Gastrocnemius medialis (tissue), 4 donors: ENCODE measurements at regions of chr2 and their contacts with region 1.

Region 1: DNA sequence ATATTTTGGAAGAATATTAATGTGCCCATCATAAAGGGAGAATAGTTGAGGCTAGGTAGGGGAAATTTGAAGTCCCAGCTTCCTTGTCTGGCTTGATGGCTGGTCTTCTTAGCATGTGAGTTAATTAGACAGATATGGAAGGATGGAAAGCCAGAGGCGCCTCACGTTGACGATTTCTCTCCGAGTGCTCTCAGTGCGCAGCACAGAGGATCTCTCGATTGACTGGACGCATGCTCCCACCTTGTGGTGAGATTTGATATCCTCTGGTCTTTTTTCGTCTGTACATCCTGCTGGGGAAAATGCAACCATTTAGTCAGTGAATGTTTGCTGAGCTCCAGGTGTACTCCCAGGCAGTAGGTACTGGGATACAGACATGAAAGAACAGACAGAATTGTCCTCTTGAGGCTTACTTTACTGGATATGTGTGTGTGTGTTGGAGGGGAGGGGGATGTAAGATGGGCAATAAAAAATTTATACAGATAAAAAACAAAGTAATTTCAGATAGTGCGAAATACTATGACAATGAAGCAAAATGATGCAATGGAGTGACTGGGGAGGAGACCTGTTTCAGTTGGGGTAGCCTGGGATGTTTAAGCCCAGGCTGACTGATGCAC is 66.9 kb upstream of the ZNG1B start:
- DNase-seq: peak; percentile 39 to 64
- ATAC-seq: peak; percentile 90 to 93
- H3K4me3 ChIP-seq: no peak overlapping the region
- H3K27ac ChIP-seq: no peak overlapping the region
- H3K4me1 ChIP-seq: peaks cover 0 to 2% of the 10 kb centered on the region in 2 donors
- H3K27me3 ChIP-seq: no peaks in the 10 kb centered on the region
- CTCF ChIP-seq: peak; percentile 48 to 74 (median 70)
- POLR2A ChIP-seq: no peak

Region 2: GRCh38 chr2:113203901-113204519 is 166.6 kb before region 1 on chr2:
- in situ Hi-C with region 1: no loop called
- intact Hi-C with region 1: loop called (anchors 2 kb)
- DNase-seq: peak; percentile 43 to 62
- ATAC-seq: peak; percentile 82 to 85
- H3K4me3 ChIP-seq: no peak overlapping the region
- H3K27ac ChIP-seq: no peak overlapping the region
- H3K4me1 ChIP-seq: peaks cover 0 to 3% of the 10 kb centered on the region in 2 donors
- H3K27me3 ChIP-seq: no peaks in the 10 kb centered on the region
- CTCF ChIP-seq: peak; percentile 65 to 82 (median 72)
- POLR2A ChIP-seq: no peak

Region 3: DNA sequence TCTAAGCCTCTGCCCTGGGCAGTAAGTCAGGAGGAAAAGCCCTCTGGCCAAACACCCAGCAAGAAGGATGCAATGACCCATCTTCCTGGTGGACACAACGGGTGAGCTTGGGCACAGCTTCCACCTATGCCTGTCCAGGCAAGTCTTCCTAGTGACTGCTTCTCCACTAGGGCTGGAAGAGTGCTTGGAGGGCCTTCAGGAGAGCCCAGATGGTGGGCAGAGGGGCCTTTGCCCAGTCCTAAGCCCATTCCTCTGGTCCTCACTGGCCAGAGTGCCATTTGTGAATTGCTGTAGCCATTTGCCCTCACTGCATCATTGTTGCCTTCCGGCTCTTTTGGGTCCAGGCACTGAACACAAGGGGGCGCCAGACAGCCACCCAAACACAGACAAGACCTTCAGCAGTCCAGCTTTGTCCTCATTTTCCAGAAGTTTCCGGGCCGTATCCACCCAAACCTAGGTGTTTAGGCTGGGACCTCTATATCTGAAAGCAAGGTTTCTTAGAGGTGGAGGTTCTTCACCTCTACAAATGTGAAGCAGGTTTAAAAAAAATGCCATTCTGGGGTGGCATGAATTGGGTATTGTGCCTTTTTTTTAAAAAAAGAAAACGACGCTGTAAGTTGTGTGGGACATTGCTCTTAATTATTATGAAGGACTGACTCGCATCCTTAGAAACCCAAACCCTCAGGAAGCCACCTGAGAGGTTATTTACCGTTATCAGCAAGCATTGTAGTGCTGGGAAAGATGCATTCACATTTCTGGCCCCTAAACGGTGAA is 121.4 kb before region 1 on chr2:
- in situ Hi-C with region 1: loop called (anchors 5 to 25 kb)
- intact Hi-C with region 1: loop called (anchors 1 kb)
- DNase-seq: peak; percentile 44 to 74
- ATAC-seq: peak; percentile 66 to 71
- H3K4me3 ChIP-seq: no peak overlapping the region
- H3K27ac ChIP-seq: no peak overlapping the region
- H3K4me1 ChIP-seq: peaks cover 0 to 3% of the 10 kb centered on the region in 2 donors
- H3K27me3 ChIP-seq: no peaks in the 10 kb centered on the region
- CTCF ChIP-seq: peak; percentile 74 to 92 (median 87)
- POLR2A ChIP-seq: no peak

Region 4: GRCh38 chr2:113273027-113273551 is 97.5 kb before region 1 on chr2:
- in situ Hi-C with region 1: loop called in 1 of 4 experiments (anchors 25 kb)
- intact Hi-C with region 1: no loop called
- DNase-seq: no peak
- ATAC-seq: no peak
- H3K4me3 ChIP-seq: no peak overlapping the region
- H3K27ac ChIP-seq: no peak overlapping the region
- H3K4me1 ChIP-seq: no peaks in the 10 kb centered on the region
- H3K27me3 ChIP-seq: peaks cover 28 to 69% (median 49%) of the 10 kb centered on the region in 3 donors
- CTCF ChIP-seq: no peak
- POLR2A ChIP-seq: no peak

Region 5: DNA sequence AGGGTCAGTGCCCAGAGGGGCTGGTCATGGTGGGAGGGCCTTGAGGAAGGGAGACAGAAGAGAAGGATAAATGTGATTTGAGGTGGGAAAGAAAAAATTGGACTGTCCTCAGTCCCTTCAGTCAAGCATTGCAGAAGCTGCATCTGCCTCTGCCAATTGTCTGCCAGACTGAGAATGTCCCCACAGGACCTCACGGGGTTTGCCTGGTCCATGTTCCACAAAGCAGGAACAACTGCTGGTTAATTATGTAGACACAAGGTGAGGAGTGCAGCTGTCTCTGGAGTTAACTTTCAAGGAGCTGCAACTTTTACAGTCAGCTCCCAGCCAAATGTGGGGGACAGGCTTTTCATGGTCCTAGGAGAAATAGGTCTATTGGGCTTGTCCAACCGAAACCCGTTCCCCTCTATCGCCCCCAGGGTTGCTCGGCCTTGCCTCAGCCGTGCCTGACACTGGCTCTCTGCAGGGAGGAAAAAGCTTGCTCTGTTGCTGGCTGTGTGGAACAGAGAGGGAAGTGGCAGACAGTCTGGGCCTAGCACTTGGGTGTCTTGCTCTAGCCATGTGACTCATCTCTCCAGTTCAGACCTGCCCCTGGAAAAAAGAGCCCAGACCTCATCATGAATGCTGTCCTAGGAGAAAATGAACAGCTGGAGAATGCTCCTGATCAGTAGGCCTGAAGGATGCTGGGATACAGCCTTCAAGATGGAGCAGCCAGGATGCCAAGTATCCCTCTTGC is 60.8 kb before region 1 on chr2:
- in situ Hi-C with region 1: no loop called
- intact Hi-C with region 1: loop called (anchors 2 kb)
- DNase-seq: peak; percentile 63 to 85
- ATAC-seq: peak; percentile 85 to 89
- H3K4me3 ChIP-seq: no peak overlapping the region
- H3K27ac ChIP-seq: peak overlapping the region; percentile 62 to 82 (median 74)
- H3K4me1 ChIP-seq: peaks cover 8 to 19% of the 10 kb centered on the region in 2 donors
- H3K27me3 ChIP-seq: no peaks in the 10 kb centered on the region
- CTCF ChIP-seq: no peak
- POLR2A ChIP-seq: no peak